GM10248 (cell line): ENCODE measurements at regions of chr19 and their contacts with region 1.

Region 1: GRCh38 chr19:6125571-6125989 is 9.9 kb upstream of the ACSBG2 start:
- DNase-seq: peak; percentile 69
- CTCF ChIP-seq: peak; percentile 85

Region 2: GRCh38 chr19:5904352-5905113 is 221.0 kb before region 1 on chr19 and contains the start of gene VMAC:
- CTCF ChIA-PET with region 1: no interaction called
- POLR2A ChIA-PET with region 1: no interaction called
- DNase-seq: peak; percentile 99
- CTCF ChIP-seq: no peak

Region 3: DNA sequence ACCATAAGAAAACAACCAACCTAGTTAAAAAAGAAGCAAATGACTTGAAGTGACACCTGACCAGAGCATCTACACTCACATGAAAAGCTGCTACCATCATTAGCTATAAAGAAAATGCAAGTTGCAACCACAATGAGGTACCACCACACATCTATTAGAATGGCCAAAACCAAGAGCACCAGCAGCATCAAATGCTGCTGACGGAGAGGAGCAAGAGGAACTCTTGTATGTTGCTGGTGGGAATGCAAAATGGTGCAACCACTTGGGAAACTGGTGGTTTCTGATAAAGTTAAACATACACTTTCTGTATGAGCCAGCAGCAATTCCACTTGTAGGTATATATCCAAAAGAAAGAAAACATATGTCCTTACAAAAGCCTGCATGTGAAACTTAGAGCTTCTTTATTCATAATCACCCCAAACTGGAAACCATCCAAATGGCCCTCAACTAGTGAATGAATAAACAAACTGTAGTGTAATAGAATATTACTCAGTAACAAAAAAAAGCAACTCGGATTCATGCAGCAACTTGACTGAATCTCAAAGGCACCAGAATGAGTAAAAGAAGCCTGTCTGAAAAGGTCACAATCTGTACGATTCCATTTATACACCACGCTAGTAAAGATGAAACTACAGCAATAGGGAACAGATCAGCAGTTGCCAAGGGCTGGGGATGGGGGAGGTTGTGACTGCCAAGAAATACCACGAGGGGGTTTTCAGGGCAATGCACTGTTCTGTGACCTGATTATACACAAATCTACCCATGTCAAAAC is 86.8 kb before region 1 on chr19:
- CTCF ChIA-PET with region 1: interaction called, 37 read pairs
- POLR2A ChIA-PET with region 1: no interaction called
- DNase-seq: peak; percentile 80
- CTCF ChIP-seq: no peak

Region 4: GRCh38 chr19:6055013-6055795 is 70.4 kb before region 1 on chr19:
- CTCF ChIA-PET with region 1: interaction called, 26 read pairs
- POLR2A ChIA-PET with region 1: no interaction called
- DNase-seq: no peak
- CTCF ChIP-seq: no peak

Region 5: DNA sequence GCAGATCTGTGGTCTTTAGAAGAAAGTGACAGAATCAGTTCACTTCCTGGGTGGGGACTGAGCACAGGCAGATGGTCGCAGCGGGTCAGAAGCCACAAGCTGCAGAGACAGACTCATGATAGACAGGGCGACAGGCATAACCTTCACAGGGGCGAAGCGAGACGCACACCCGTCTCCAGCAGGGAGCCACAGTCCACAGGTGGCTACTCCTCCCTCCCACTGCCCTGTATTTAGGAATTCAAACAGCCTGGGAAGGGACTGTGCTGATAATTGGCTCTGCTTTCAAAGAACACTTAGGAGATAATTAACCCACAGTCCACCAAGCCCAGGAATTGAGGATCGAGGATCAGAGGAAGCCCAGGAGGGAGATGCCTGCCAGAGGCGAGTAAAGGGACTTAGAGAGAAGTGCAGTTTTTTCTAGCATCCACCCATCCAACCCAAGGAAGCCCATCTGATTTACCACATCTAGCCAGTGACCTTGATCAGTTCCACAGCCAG is 38.5 kb before region 1 on chr19:
- CTCF ChIA-PET with region 1: interaction called, 11 read pairs
- POLR2A ChIA-PET with region 1: interaction called, 3 read pairs
- DNase-seq: peak; percentile 68
- CTCF ChIP-seq: no peak

Region 6: DNA sequence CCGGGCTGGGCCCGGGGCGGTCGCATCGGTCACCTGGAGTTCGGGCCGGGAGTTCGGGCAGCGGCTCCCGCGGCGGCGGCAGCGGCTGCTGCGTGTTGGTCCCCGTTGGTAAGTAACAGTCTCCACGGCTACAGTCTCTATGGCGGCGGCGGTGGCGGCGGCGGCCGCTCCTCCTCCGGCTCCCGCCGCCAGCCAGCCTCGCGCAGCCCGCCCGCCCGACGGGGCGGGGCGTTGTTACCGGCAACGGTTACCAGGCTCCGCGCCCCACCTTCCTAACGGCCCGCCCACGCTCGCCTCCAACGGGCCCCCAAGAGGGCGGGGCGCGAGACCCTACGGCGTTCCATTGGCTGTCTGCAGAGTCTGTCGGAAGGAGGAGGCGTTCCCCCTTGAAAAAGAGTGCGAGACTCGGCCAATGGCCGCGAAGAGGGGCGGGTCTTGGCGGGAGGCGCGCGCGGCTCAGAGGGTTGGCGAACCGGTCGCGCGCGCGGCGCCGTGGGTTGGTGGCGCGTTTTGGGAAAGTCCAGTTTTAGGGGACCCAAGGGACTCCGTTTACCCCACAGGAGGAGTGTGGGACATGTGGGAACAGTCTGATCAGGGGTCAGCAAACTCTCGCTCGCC is 15.1 kb before region 1 on chr19 and contains the start of gene RFX2:
- CTCF ChIA-PET with region 1: interaction called, 37 read pairs
- POLR2A ChIA-PET with region 1: interaction called, 3 read pairs
- DNase-seq: peak; percentile 99
- CTCF ChIP-seq: no peak

Region 7: GRCh38 chr19:6862673-6863078 is 737.1 kb after region 1 on chr19:
- CTCF ChIA-PET with region 1: interaction called, 28 read pairs
- POLR2A ChIA-PET with region 1: no interaction called
- DNase-seq: peak; percentile 87
- CTCF ChIP-seq: peak; percentile 97